ENCODE measurements at regions of chr5 and their contacts with region 1.

Region 1: GRCh38 chr5:38441453-38442246 is 114.8 kb downstream of the LIFR start:
- DNase-seq: peak; percentile 78
- ATAC-seq: peak; percentile 91
- H3K4me3 ChIP-seq: no peak overlapping the region
- H3K4me3 Mint-ChIP-seq: no peak overlapping the region
- H3K27ac ChIP-seq: no peak overlapping the region
- H3K27ac Mint-ChIP-seq: peak overlapping the region; percentile 53
- H3K4me1 ChIP-seq: no peaks in the 10 kb centered on the region
- H3K4me1 Mint-ChIP-seq: no peaks in the 10 kb centered on the region
- H3K27me3 ChIP-seq: peaks cover 0 to 52% (median 21%) of the 10 kb centered on the region in 4 experiments
- H3K27me3 Mint-ChIP-seq: peaks cover 51% of the 10 kb centered on the region
- CTCF ChIP-seq: peak; percentile 94

Region 2: DNA sequence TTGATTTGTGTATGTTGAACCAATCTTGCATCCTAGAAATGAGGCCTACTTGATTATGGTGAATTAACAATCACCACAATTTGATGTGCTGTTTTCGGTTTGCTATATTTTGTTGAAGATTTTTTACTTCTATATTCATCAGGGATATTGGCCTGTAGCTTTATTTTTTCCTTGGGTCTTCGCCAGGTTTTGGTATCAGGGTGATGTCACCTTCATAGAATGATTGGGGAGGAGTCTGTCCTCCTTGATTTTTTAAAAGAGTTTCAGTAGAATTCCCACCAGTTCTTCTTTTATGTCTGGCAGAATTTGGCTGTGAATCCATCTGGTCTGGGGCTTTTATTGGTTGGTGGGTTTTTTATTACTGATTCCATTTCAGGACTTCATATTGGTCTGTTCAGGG is 1307.7 kb before region 1 on chr5:
- CTCF ChIA-PET with region 1: no interaction called
- POLR2A ChIA-PET with region 1: no interaction called
- intact Hi-C with region 1: no loop called
- DNase-seq: no peak
- ATAC-seq: no peak
- H3K4me3 ChIP-seq: no peak overlapping the region
- H3K4me3 Mint-ChIP-seq: no peak overlapping the region
- H3K27ac ChIP-seq: no peak overlapping the region
- H3K27ac Mint-ChIP-seq: no peak overlapping the region
- H3K4me1 ChIP-seq: no peaks in the 10 kb centered on the region
- H3K4me1 Mint-ChIP-seq: no peaks in the 10 kb centered on the region
- H3K27me3 ChIP-seq: no peaks in the 10 kb centered on the region
- H3K27me3 Mint-ChIP-seq: no peaks in the 10 kb centered on the region
- CTCF ChIP-seq: no peak

Region 3: GRCh38 chr5:38453506-38453905 is 11.9 kb after region 1 on chr5:
- CTCF ChIA-PET with region 1: interaction called, 31 read pairs
- POLR2A ChIA-PET with region 1: no interaction called
- intact Hi-C with region 1: no loop called
- DNase-seq: peak; percentile 67
- ATAC-seq: peak; percentile 77
- H3K4me3 ChIP-seq: no peak overlapping the region
- H3K4me3 Mint-ChIP-seq: no peak overlapping the region
- H3K27ac ChIP-seq: no peak overlapping the region
- H3K27ac Mint-ChIP-seq: no peak overlapping the region
- H3K4me1 ChIP-seq: peaks cover 17 to 23% of the 10 kb centered on the region in 2 donors
- H3K4me1 Mint-ChIP-seq: peaks cover 11% of the 10 kb centered on the region
- H3K27me3 ChIP-seq: peaks cover 1 to 67% (median 55%) of the 10 kb centered on the region in 4 experiments
- H3K27me3 Mint-ChIP-seq: peaks cover 65% of the 10 kb centered on the region
- CTCF ChIP-seq: no peak

Region 4: GRCh38 chr5:38556599-38557305 is 115.1 kb after region 1 on chr5 and contains the start of gene LIFR:
- CTCF ChIA-PET with region 1: interaction called, 7 read pairs
- POLR2A ChIA-PET with region 1: no interaction called
- intact Hi-C with region 1: loop called (anchors 2 kb)
- DNase-seq: peak; percentile 30
- ATAC-seq: peak; percentile 36
- H3K4me3 ChIP-seq: peak within 1 kb of the TSS in 4 of 5 experiments; percentile 21 to 47 (median 40)
- H3K4me3 Mint-ChIP-seq: peak within 1 kb of the TSS; percentile 84
- H3K27ac ChIP-seq: no peak within 1 kb of the TSS
- H3K27ac Mint-ChIP-seq: no peak within 1 kb of the TSS
- H3K4me1 ChIP-seq: peaks cover 8 to 15% of the 10 kb centered on the region in 2 donors
- H3K4me1 Mint-ChIP-seq: peaks cover 12% of the 10 kb centered on the region
- H3K27me3 ChIP-seq: peaks cover 0 to 43% (median 31%) of the 10 kb centered on the region in 4 experiments
- H3K27me3 Mint-ChIP-seq: peaks cover 61% of the 10 kb centered on the region
- CTCF ChIP-seq: no peak
- total RNA-seq, gene LIFR: not detected in 2 replicates

Region 5: DNA sequence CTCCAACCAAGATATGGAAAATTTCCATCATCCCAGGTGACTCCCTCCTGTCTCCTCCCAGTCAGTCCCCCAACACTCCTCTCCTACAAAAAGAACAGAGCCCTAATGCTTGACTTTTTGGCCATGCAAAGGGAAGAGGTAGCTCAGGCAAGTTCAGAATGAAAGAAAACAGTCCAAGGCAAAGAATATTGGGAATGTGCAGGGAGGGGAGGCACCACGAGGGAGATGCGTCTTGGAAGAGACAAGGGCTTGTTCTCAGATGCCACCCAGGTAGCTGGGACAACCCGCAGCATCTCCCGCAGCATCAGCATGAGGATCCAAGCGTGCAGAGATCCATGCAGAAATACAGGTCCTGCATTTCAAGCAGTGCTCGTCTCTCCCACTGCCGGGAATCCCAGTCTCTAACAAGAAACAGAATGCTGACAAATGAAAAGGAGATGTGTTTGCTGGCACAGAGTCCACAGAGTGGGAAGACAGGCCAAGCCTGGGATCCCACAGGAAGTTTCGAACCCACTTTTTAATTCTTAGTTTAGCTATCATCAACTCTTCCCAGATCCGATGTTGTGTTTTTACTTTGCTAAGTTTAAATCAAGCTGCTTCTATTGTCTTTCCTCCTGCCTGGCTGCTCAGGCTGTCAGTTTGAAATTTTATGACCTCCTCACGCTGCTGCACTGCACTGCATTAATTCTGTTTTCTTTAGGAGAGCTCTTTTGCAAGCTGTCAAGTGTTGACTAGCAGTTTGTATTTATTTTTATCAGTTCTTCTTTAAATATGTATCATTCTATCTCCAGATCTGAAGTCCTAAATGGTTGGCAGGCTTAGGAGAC is 317.3 kb after region 1 on chr5:
- CTCF ChIA-PET with region 1: no interaction called
- POLR2A ChIA-PET with region 1: no interaction called
- intact Hi-C with region 1: no loop called
- DNase-seq: no peak
- ATAC-seq: no peak
- H3K4me3 ChIP-seq: no peak overlapping the region
- H3K4me3 Mint-ChIP-seq: no peak overlapping the region
- H3K27ac ChIP-seq: no peak overlapping the region
- H3K27ac Mint-ChIP-seq: no peak overlapping the region
- H3K4me1 ChIP-seq: no peaks in the 10 kb centered on the region
- H3K4me1 Mint-ChIP-seq: no peaks in the 10 kb centered on the region
- H3K27me3 ChIP-seq: no peaks in the 10 kb centered on the region
- H3K27me3 Mint-ChIP-seq: peaks cover 14% of the 10 kb centered on the region
- CTCF ChIP-seq: no peak

Region 6: DNA sequence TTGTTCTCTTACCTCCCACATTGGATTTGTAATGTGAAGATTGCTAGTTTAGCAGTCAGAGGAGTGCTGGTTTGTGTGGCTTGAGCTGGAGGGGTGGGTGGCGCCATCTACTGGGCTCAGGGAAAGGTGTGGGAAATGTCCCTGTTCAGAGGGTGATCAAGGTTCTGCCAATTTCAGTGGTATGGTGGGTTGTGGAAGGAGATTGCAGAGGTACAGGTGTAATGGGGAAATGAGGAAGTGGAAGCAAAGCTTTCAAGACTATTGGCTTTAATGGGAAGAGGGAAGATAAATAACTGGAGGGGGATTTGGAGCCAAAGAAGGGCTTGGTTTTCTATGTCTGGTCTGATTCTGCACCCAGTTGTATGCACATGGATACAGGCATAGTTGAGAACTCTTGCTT is 480.5 kb after region 1 on chr5:
- CTCF ChIA-PET with region 1: interaction called, 59 read pairs
- POLR2A ChIA-PET with region 1: no interaction called
- intact Hi-C with region 1: loop called (anchors 1 kb)
- DNase-seq: peak; percentile 39
- ATAC-seq: no peak
- H3K4me3 ChIP-seq: no peak overlapping the region
- H3K4me3 Mint-ChIP-seq: no peak overlapping the region
- H3K27ac ChIP-seq: no peak overlapping the region
- H3K27ac Mint-ChIP-seq: no peak overlapping the region
- H3K4me1 ChIP-seq: no peaks in the 10 kb centered on the region
- H3K4me1 Mint-ChIP-seq: no peaks in the 10 kb centered on the region
- H3K27me3 ChIP-seq: no peaks in the 10 kb centered on the region
- H3K27me3 Mint-ChIP-seq: peaks cover 43% of the 10 kb centered on the region
- CTCF ChIP-seq: peak; percentile 75

Region 7: DNA sequence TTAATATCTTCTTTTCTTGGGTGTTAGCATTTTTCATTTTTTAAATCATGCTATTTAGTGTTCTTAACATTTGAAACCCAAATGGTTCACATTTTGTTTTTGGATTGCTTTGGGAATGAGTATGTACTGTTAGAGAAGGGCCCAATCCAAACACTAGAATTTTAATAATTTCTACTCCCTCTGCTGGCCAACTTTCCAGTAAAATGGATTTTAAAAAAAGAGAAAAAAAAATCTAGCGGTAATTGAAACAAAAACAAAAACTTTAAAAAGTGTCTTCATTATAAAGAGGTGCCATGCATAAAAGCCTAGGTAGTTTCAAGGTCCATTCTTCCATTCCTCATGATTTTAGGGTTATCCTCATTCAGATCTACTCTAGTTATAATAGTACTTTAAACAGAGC is 664.7 kb after region 1 on chr5:
- CTCF ChIA-PET with region 1: interaction called, 8 read pairs
- POLR2A ChIA-PET with region 1: no interaction called
- intact Hi-C with region 1: loop called (anchors 1 kb)
- DNase-seq: peak; percentile 18
- ATAC-seq: no peak
- H3K4me3 ChIP-seq: no peak overlapping the region
- H3K4me3 Mint-ChIP-seq: no peak overlapping the region
- H3K27ac ChIP-seq: no peak overlapping the region
- H3K27ac Mint-ChIP-seq: no peak overlapping the region
- H3K4me1 ChIP-seq: no peaks in the 10 kb centered on the region
- H3K4me1 Mint-ChIP-seq: no peaks in the 10 kb centered on the region
- H3K27me3 ChIP-seq: no peaks in the 10 kb centered on the region
- H3K27me3 Mint-ChIP-seq: peaks cover 5% of the 10 kb centered on the region
- CTCF ChIP-seq: peak; percentile 34

Region 8: GRCh38 chr5:39547553-39548154 is 1106.0 kb after region 1 on chr5:
- CTCF ChIA-PET with region 1: interaction called, 11 read pairs
- POLR2A ChIA-PET with region 1: no interaction called
- intact Hi-C with region 1: no loop called
- DNase-seq: peak; percentile 47
- ATAC-seq: no peak
- H3K4me3 ChIP-seq: no peak overlapping the region
- H3K4me3 Mint-ChIP-seq: no peak overlapping the region
- H3K27ac ChIP-seq: no peak overlapping the region
- H3K27ac Mint-ChIP-seq: no peak overlapping the region
- H3K4me1 ChIP-seq: peaks cover 2 to 3% of the 10 kb centered on the region in 2 donors
- H3K4me1 Mint-ChIP-seq: peaks cover 1% of the 10 kb centered on the region
- H3K27me3 ChIP-seq: peaks cover 0 to 8% (median under 1%) of the 10 kb centered on the region in 4 experiments
- H3K27me3 Mint-ChIP-seq: peaks cover 19% of the 10 kb centered on the region
- CTCF ChIP-seq: peak; percentile 74